Calu3 (cell line): ENCODE measurements at regions of chr3 and their contacts with region 1.

Region 1: GRCh38 chr3:151316267-151316991 is at the start of gene GPR87:
- DNase-seq: peak; percentile 66
- H3K4me3 Mint-ChIP-seq: peak within 1 kb of the TSS; percentile 10
- H3K27ac Mint-ChIP-seq: peak within 1 kb of the TSS; percentile 71
- H3K4me1 Mint-ChIP-seq: peaks cover 31% of the 10 kb centered on the region
- H3K27me3 Mint-ChIP-seq: no peaks in the 10 kb centered on the region
- CTCF ChIP-seq: no peak
- total RNA-seq, gene GPR87: 1.2 and 1.5 TPM in 2 replicates

Region 2: DNA sequence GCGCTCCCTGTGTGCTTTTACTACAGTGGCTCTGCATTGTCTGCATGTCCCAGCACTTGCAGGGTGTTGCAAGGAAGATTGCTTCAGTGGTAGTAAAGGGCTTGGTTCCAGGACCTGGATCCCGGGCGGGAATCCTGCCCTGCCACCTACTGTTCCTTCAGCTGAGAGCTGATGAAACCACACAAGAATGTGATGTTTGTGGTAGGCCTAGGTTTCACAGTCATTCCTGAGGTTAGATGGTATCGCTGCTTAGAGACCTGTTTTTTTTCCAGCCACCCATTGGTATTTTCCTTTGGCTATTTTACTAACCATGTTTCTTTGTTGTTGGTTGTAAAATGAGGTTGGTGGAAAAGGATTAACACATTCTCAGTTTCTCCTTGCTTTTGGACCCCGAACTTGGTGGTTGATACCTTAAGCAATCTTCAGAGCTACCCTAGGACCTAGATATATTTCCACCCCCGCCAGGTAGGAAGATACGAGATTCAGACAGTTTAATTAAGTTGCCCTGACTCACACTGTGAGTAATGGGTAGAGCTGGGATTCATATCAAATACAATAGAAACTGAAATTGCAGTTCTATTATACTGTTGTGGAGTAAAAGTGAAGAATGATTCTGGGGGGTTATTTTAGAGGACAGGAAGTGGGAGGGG is 11.2 kb before region 1 on chr3:
- CTCF ChIA-PET with region 1: interaction called, 11 read pairs
- intact Hi-C with region 1: loop called (anchors 1 kb)
- DNase-seq: peak; percentile 91
- H3K4me3 Mint-ChIP-seq: peak overlapping the region; percentile 50
- H3K27ac Mint-ChIP-seq: peak overlapping the region; percentile 91
- H3K4me1 Mint-ChIP-seq: peaks cover 53% of the 10 kb centered on the region
- H3K27me3 Mint-ChIP-seq: no peaks in the 10 kb centered on the region
- CTCF ChIP-seq: no peak